ENCODE measurements at regions of chr5 and their contacts with region 1.

Region 1: GRCh38 chr5:91162534-91163381 is 220.4 kb downstream of the ARRDC3 start:
- DNase-seq: peak; percentile 98
- H3K4me3 ChIP-seq: peak overlapping the region in 2 of 3 experiments; percentile 1 to 30
- H3K27ac ChIP-seq: peak overlapping the region; percentile 96
- H3K4me1 ChIP-seq: peaks cover 46% of the 10 kb centered on the region
- H3K27me3 ChIP-seq: no peaks in the 10 kb centered on the region
- CTCF ChIP-seq: no peak

Region 2: GRCh38 chr5:91126448-91126847 is 36.3 kb before region 1 on chr5:
- CTCF ChIA-PET with region 1: no interaction called
- dilution Hi-C with region 1: no loop called
- in situ Hi-C with region 1: no loop called
- intact Hi-C with region 1: loop called (anchors 5 kb)
- DNase-seq: no peak
- H3K4me3 ChIP-seq: no peak overlapping the region
- H3K27ac ChIP-seq: no peak overlapping the region
- H3K4me1 ChIP-seq: peaks cover under 1% of the 10 kb centered on the region
- H3K27me3 ChIP-seq: no peaks in the 10 kb centered on the region
- CTCF ChIP-seq: no peak

Region 3: GRCh38 chr5:91212714-91213092 is 49.9 kb after region 1 on chr5:
- CTCF ChIA-PET with region 1: no interaction called
- dilution Hi-C with region 1: no loop called
- in situ Hi-C with region 1: no loop called
- intact Hi-C with region 1: loop called (anchors 5 kb)
- DNase-seq: peak; percentile 30
- H3K4me3 ChIP-seq: no peak overlapping the region
- H3K27ac ChIP-seq: no peak overlapping the region
- H3K4me1 ChIP-seq: peaks cover 1% of the 10 kb centered on the region
- H3K27me3 ChIP-seq: no peaks in the 10 kb centered on the region
- CTCF ChIP-seq: no peak

Region 4: DNA sequence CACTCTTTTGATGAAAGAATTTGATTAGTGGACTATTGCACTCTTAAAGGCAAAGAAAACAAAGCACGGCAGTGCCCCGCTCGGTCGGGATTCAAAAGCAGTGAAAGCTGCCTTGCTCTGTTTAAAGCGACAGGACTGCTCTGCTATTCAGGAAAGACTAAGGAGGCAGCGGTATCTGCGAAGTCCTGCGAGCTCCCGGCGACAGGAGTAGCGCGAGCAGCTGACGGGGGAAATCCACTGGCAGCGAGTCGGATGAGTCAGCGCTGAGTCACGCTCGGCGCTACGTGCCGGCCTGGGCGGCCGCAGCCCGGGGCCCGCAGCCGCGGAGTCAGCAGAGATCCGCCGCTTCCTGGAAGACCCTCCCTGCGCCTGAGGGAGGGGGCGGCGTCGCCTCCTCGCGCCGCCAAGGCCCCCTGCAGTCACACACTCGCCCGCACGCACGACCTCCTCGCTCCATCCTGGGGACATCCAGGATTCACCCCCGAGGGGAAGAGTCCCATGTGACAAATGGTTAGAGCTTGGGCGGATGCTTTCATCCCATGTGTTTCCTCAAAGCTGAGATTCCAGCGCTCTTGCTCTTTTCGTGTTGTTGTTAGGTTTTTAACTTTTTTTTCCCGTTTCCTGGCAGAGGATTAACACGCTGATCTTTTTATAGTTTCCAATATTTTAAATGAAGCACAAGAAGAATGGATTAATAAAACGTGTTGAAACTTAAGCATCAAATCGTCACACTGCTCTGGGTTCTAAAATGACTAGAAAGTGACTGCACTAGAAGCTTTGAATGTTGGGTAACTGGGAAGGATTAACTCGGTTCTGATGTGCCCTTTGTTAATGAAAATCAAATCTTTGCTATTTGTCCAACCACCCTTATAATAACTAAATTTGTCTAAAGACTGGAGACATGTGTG is 117.9 kb after region 1 on chr5:
- CTCF ChIA-PET with region 1: no interaction called
- dilution Hi-C with region 1: no loop called
- in situ Hi-C with region 1: loop called in 1 of 2 experiments (anchors 10 kb)
- intact Hi-C with region 1: loop called (anchors 5 kb)
- DNase-seq: peak; percentile 96
- H3K4me3 ChIP-seq: peak overlapping the region; percentile 47 to 66 (median 59)
- H3K27ac ChIP-seq: peak overlapping the region; percentile 98
- H3K4me1 ChIP-seq: peaks cover 31% of the 10 kb centered on the region
- H3K27me3 ChIP-seq: no peaks in the 10 kb centered on the region
- CTCF ChIP-seq: no peak

Measured in mammary epithelial cell (primary cell).